HepG2 (cell line): ENCODE measurements at regions of chr4 and their contacts with region 1.

Region 1: DNA sequence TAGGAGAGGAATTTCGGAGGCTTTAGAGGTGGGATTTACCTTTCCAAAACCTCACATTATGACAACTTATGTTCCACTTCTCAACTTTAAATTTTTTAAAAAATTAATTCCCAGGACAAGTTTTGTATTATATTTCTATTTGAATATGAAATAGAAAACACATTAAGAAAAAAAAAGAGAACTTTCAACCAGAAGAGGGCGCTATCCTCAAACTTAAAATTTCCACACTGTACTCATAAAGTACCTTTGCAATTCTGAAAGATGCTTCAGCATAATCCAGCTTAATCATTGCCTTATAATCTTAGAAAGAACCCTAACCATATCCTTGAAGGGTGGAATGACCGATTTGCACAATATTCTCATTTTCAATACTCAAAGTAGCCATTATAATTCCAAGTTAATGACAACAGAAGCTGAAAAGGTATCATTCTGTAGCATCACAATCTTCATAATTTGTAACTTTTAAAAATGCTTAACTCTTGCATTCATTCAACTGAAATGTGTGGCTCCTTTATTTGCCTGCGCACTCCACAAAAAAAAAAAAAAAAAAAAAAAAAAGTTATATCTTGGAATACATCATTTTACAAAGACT is 158.0 kb downstream of the KCNIP4 start:
- DNase-seq: no peak
- ATAC-seq: peak; percentile 25; the same call in 1 of the 3 replicates
- H3K4me3 ChIP-seq: no peak overlapping the region
- H3K27ac ChIP-seq: no peak overlapping the region
- H3K4me1 ChIP-seq: peaks cover 5% of the 10 kb centered on the region; the same call in 1 of the 2 replicates
- H3K27me3 ChIP-seq: no peaks in the 10 kb centered on the region
- CTCF ChIP-seq: peak; percentile 39
- EP300 ChIP-seq: no peak
- POLR2A ChIP-seq: no peak
- RAD21 ChIP-seq: no peak

Region 2: GRCh38 chr4:21656832-21657231 is 133.7 kb before region 1 on chr4:
- CTCF ChIA-PET with region 1: no interaction called
- POLR2A ChIA-PET with region 1: no interaction called
- in situ Hi-C with region 1: no loop called
- intact Hi-C with region 1: no loop called
- DNase-seq: peak; percentile 2
- ATAC-seq: no peak
- H3K4me3 ChIP-seq: no peak overlapping the region
- H3K27ac ChIP-seq: no peak overlapping the region
- H3K4me1 ChIP-seq: no peaks in the 10 kb centered on the region
- H3K27me3 ChIP-seq: no peaks in the 10 kb centered on the region
- CTCF ChIP-seq: no peak
- EP300 ChIP-seq: no peak
- POLR2A ChIP-seq: no peak
- RAD21 ChIP-seq: no peak

Region 3: DNA sequence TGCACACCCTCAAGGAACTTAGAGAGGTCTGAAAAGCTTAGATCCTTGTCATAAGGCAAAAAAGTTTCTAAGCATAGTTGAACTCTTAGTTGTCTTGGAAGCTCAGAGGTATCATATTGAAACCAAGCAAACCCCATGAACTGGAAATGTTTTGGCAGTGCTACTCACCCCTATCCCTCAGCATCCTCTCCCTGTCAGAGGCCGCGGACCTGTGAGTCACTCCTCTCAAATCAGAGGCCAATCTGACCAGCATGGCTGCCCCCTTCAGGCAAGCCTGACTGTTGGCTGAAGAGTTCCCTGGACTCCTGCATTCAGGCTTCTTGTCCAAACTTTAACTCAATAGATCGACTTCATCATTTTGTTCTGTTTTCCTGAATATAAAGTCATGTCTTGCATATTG is 88.7 kb after region 1 on chr4:
- CTCF ChIA-PET with region 1: no interaction called
- POLR2A ChIA-PET with region 1: no interaction called
- in situ Hi-C with region 1: no loop called
- intact Hi-C with region 1: loop called (anchors 1 kb)
- DNase-seq: peak; percentile 5
- ATAC-seq: peak; percentile 76
- H3K4me3 ChIP-seq: no peak overlapping the region
- H3K27ac ChIP-seq: no peak overlapping the region
- H3K4me1 ChIP-seq: no peaks in the 10 kb centered on the region
- H3K27me3 ChIP-seq: no peaks in the 10 kb centered on the region
- CTCF ChIP-seq: no peak
- EP300 ChIP-seq: no peak
- POLR2A ChIP-seq: no peak
- RAD21 ChIP-seq: no peak

Region 4: GRCh38 chr4:22129454-22130029 is 339.0 kb after region 1 on chr4:
- CTCF ChIA-PET with region 1: interaction called, 3 read pairs
- POLR2A ChIA-PET with region 1: no interaction called
- in situ Hi-C with region 1: no loop called
- intact Hi-C with region 1: loop called (anchors 2 kb)
- DNase-seq: peak; percentile 5
- ATAC-seq: peak; percentile 84
- H3K4me3 ChIP-seq: no peak overlapping the region
- H3K27ac ChIP-seq: no peak overlapping the region
- H3K4me1 ChIP-seq: no peaks in the 10 kb centered on the region
- H3K27me3 ChIP-seq: no peaks in the 10 kb centered on the region
- CTCF ChIP-seq: peak; percentile 70
- EP300 ChIP-seq: no peak
- POLR2A ChIP-seq: no peak
- RAD21 ChIP-seq: no peak

Region 5: DNA sequence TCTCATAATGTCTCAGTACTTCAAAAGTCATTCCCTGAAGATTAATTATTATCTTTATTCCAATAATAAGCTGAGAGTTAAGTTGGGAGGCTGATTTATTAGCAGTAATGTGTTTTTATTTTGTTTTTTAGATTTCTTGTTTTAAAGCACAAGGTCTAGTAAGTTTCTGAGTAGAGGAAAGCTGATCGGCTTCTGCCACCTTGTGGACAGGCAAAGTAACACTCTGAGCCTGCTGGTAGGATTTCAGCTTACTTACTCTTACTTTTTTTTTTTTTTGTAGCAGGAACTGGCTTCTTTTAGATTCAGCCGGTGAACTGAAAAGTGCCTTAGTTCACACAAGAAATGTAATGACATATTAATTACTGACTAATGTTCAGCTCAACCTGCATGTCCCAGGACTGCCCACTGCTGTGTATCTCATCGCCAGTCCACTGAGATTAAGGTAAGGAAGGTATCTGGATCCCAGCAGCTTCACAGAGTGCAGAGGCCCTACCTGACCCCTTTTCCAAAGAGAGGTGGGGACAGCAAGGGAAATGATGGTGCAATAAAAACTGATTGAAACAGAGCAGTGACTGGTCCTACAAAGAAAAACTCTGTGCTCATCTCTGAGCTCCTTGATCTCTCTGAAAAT is 598.8 kb after region 1 on chr4:
- CTCF ChIA-PET with region 1: interaction called, 31 read pairs
- POLR2A ChIA-PET with region 1: no interaction called
- in situ Hi-C with region 1: loop called (anchors 5 kb)
- intact Hi-C with region 1: loop called (anchors 1 kb)
- DNase-seq: peak; percentile 59
- ATAC-seq: peak; percentile 87
- H3K4me3 ChIP-seq: no peak overlapping the region
- H3K27ac ChIP-seq: no peak overlapping the region
- H3K4me1 ChIP-seq: no peaks in the 10 kb centered on the region
- H3K27me3 ChIP-seq: no peaks in the 10 kb centered on the region
- CTCF ChIP-seq: peak; percentile 71
- EP300 ChIP-seq: no peak
- POLR2A ChIP-seq: no peak
- RAD21 ChIP-seq: peak; percentile 61

Region 6: GRCh38 chr4:22607382-22607781 is 816.8 kb after region 1 on chr4:
- CTCF ChIA-PET with region 1: no interaction called
- POLR2A ChIA-PET with region 1: no interaction called
- in situ Hi-C with region 1: no loop called
- intact Hi-C with region 1: loop called (anchors 2 kb)
- DNase-seq: peak; percentile 35
- ATAC-seq: peak; percentile 100
- H3K4me3 ChIP-seq: no peak overlapping the region
- H3K27ac ChIP-seq: no peak overlapping the region
- H3K4me1 ChIP-seq: no peaks in the 10 kb centered on the region
- H3K27me3 ChIP-seq: 0 out of 5 replicates have a peak, but pooled peaks cover 0 to 5% of the 10 kb centered on the region in 2 experiments
- CTCF ChIP-seq: peak; percentile 85
- EP300 ChIP-seq: no peak
- POLR2A ChIP-seq: no peak
- RAD21 ChIP-seq: peak; percentile 53; the same call in 1 of the 2 replicates

Region 7: GRCh38 chr4:22688236-22688635 is 897.7 kb after region 1 on chr4:
- CTCF ChIA-PET with region 1: interaction called, 12 read pairs
- POLR2A ChIA-PET with region 1: no interaction called
- in situ Hi-C with region 1: loop called (anchors 10 kb)
- intact Hi-C with region 1: loop called (anchors 5 kb)
- DNase-seq: no peak
- ATAC-seq: no peak
- H3K4me3 ChIP-seq: no peak overlapping the region
- H3K27ac ChIP-seq: no peak overlapping the region
- H3K4me1 ChIP-seq: peaks cover 17% of the 10 kb centered on the region; the same call in 1 of the 2 replicates
- H3K27me3 ChIP-seq: no peaks in the 10 kb centered on the region
- CTCF ChIP-seq: no peak
- EP300 ChIP-seq: no peak
- POLR2A ChIP-seq: no peak
- RAD21 ChIP-seq: no peak